ENCODE measurements at regions of chr7 and their contacts with region 1.

Region 1: DNA sequence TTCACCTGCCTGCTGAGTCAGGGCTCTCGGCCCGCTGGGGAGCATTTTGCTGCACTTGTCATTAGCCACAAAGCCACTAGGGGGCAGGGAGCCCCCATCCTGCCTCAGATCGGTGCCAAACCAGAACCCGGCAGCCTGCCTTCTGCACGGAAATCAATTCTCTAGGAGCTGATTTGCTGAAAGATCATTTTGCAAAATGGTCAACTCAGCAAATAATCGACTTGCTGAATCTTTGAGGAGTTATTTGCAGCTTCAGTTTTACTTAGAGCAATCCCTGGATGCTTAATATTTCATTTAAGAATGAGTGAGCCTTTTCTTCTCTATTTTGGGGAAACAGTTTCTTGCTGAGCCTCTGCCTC is 1.7 kb upstream of the GIMAP8 start:
- ATAC-seq: peak; percentile 87 to 96 (median 94)
- H3K4me3 ChIP-seq: no peak overlapping the region
- H3K27ac ChIP-seq: no peak overlapping the region
- H3K4me1 ChIP-seq: peaks cover 0 to 3% of the 10 kb centered on the region in 2 donors

Region 2: DNA sequence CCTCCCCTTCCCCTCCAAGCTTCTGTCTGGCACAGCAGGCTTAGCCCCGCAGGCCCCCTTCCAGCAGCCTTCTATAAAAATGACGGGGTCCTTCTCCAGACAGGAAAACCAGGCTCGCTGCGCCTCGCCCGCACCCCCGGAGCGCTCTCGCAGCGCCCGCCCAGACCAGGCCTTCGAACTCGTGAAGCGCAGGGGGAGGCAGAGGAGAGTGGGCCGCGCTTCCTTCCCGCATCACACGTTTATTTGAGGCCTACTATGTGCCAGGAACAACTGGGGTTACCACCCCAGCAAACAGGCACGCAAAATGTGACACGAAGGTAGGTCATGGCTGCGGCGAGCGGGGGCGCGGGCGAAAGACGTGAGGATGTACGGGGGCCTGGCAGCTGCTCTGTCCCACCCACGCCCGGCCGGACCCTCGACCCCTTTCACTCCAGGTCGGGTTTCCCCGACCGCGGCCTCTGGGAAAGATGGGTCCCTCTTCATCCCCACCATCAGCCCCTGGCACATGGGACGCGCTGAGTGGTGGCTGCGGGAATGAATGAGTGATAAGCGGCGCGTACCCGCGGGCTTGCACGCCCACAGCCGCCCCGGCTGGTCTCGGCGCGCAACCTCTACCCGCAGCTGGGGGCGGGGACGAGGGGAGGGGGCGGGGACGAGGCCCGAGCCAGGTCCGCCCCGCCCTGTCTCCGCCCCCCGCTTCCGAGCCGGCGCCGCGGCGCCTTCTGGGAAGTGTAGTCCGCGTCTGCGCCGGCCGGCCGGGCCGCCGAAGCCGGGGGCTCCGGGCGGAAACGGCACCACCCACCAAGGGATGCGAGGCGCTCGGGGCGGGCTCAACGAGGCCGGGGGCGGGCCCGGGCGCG is 734.5 kb before region 1 on chr7:
- in situ Hi-C with region 1: no loop called
- ATAC-seq: peak; percentile 86 to 95 (median 94)
- H3K4me3 ChIP-seq: peak overlapping the region; percentile 49 to 84 (median 70)
- H3K27ac ChIP-seq: no peak overlapping the region
- H3K4me1 ChIP-seq: peaks cover 8 to 10% of the 10 kb centered on the region in 2 donors

Region 3: GRCh38 chr7:150753826-150754603 is 305.2 kb after region 1 on chr7:
- in situ Hi-C with region 1: loop called in 1 of 9 experiments (anchors 25 kb)
- ATAC-seq: peak in 2 of 8 experiments; percentile 48 to 55
- H3K4me3 ChIP-seq: no peak overlapping the region
- H3K27ac ChIP-seq: no peak overlapping the region
- H3K4me1 ChIP-seq: no peaks in the 10 kb centered on the region